Transverse colon (tissue), 4 donors: ENCODE measurements at regions of chr5 and their contacts with region 1.

Region 1: GRCh38 chr5:90395009-90395408 is 14.5 kb downstream of the CETN3 start:
- DNase-seq: no peak
- H3K4me3 ChIP-seq: no peak overlapping the region
- H3K27ac ChIP-seq: no peak overlapping the region
- H3K4me1 ChIP-seq: no peaks in the 10 kb centered on the region
- H3K27me3 ChIP-seq: no peaks in the 10 kb centered on the region
- CTCF ChIP-seq: no peak
- EP300 ChIP-seq: no peak
- POLR2A ChIP-seq: no peak

Region 2: GRCh38 chr5:90347462-90347861 is 47.5 kb before region 1 on chr5:
- in situ Hi-C with region 1: no loop called
- intact Hi-C with region 1: no loop called
- DNase-seq: no peak
- H3K4me3 ChIP-seq: no peak overlapping the region
- H3K27ac ChIP-seq: no peak overlapping the region
- H3K4me1 ChIP-seq: no peaks in the 10 kb centered on the region
- H3K27me3 ChIP-seq: no peaks in the 10 kb centered on the region
- CTCF ChIP-seq: no peak
- EP300 ChIP-seq: no peak
- POLR2A ChIP-seq: no peak

Region 3: DNA sequence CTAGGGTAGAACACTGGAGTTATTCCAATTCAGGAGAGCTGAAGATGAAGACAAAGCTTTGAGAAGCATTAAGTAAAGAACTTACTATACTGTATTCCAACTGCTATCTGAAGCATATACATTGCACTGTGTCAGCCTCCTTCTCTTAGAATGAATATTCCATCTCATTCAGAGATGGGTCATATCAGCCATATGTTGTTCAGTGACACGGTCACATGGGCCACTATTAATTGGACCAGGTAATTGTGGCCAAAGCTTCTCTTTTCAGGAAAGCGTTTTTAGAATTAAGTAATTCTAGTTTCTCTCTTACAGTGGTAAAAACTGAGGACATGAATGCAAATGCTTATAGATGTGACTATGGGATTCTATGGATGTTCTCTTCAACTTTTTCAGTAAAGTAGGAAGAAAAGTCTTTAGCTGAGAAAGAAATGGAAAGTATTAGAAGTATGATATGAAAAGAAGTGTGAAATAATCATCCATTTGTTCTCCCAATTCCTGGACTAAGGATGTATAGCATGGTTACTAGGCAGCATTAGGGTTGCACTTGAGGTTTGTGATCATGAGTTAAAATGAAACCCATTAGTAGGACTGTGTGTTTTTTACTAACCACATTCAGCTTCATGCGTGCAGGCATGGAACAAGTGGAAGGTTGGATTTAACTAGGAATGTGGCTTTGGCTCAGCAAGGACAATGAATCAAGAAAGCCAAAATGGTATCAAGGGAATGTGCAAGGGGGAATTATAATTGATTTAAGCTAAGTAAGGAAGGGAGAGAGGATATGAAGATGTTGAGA is 26.4 kb before region 1 on chr5:
- in situ Hi-C with region 1: no loop called
- intact Hi-C with region 1: loop called (anchors 2 kb)
- DNase-seq: no peak
- H3K4me3 ChIP-seq: no peak overlapping the region
- H3K27ac ChIP-seq: no peak overlapping the region
- H3K4me1 ChIP-seq: no peaks in the 10 kb centered on the region
- H3K27me3 ChIP-seq: no peaks in the 10 kb centered on the region
- CTCF ChIP-seq: no peak
- EP300 ChIP-seq: no peak
- POLR2A ChIP-seq: no peak

Region 4: GRCh38 chr5:90381211-90381929 is 13.6 kb before region 1 on chr5:
- in situ Hi-C with region 1: no loop called
- intact Hi-C with region 1: no loop called
- DNase-seq: peak; percentile 38
- H3K4me3 ChIP-seq: no peak overlapping the region
- H3K27ac ChIP-seq: peak overlapping the region in 2 of 4 donors; percentile 31 to 37
- H3K4me1 ChIP-seq: peaks cover 0 to 10% (median 5%) of the 10 kb centered on the region in 4 donors
- H3K27me3 ChIP-seq: no peaks in the 10 kb centered on the region
- CTCF ChIP-seq: no peak
- EP300 ChIP-seq: no peak
- POLR2A ChIP-seq: no peak

Region 5: GRCh38 chr5:90409318-90410177 is 14.5 kb after region 1 on chr5 and contains the start of gene CETN3:
- in situ Hi-C with region 1: no loop called
- intact Hi-C with region 1: no loop called
- DNase-seq: peak; percentile 94
- H3K4me3 ChIP-seq: peak within 1 kb of the TSS; percentile 59 to 93 (median 83)
- H3K27ac ChIP-seq: peak within 1 kb of the TSS; percentile 96 to 99 (median 98)
- H3K4me1 ChIP-seq: peaks cover 0 to 42% (median 8%) of the 10 kb centered on the region in 4 donors
- H3K27me3 ChIP-seq: no peaks in the 10 kb centered on the region
- CTCF ChIP-seq: peak in 1 of 5 experiments; percentile 28
- EP300 ChIP-seq: no peak
- POLR2A ChIP-seq: peak; percentile 94
- total RNA-seq, gene CETN3: 9.7 to 22.7 TPM in 2 of 4 donors, not detected in the others